ENCODE measurements at regions of chr5 and their contacts with region 1.

Region 1: GRCh38 chr5:50667653-50668595 is 1.5 kb downstream of the PARP8 start:
- DNase-seq: peak; percentile 88
- H3K4me3 ChIP-seq: peak overlapping the region; percentile 91
- H3K27ac ChIP-seq: peak overlapping the region; percentile 83
- H3K4me1 ChIP-seq: peaks cover 48% of the 10 kb centered on the region
- CTCF ChIP-seq: no peak; the same call in 1 of the 2 replicates

Region 2: GRCh38 chr5:50501491-50502228 is 166.3 kb before region 1 on chr5:
- CTCF ChIA-PET with region 1: no interaction called
- POLR2A ChIA-PET with region 1: no interaction called
- intact Hi-C with region 1: loop called (anchors 5 kb)
- DNase-seq: peak; percentile 89
- H3K4me3 ChIP-seq: peak overlapping the region; percentile 52
- H3K27ac ChIP-seq: peak overlapping the region; percentile 95
- H3K4me1 ChIP-seq: peaks cover 26% of the 10 kb centered on the region
- CTCF ChIP-seq: no peak

Region 3: DNA sequence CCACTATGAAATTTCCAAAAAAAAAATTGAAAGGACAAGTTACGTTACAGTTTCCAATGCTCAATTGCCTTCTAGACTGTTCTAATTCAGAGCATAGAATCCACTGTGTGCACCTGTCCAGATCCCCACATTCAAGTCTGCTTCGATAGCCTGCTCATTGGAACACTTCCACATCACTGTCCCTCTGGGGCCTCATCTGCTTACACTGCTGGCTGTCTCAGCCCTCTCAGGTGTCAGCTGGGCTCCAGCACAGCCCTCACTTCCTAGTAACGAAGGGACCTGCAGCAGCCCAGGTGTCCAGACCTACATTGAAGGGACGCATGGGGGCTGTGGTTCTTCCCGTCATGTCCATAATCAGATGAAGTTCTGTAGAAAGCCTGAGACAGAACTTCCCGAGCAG is 132.5 kb before region 1 on chr5:
- CTCF ChIA-PET with region 1: no interaction called
- POLR2A ChIA-PET with region 1: no interaction called
- intact Hi-C with region 1: loop called (anchors 5 kb)
- DNase-seq: peak; percentile 65
- H3K4me3 ChIP-seq: no peak overlapping the region
- H3K27ac ChIP-seq: no peak overlapping the region
- H3K4me1 ChIP-seq: peaks cover 30% of the 10 kb centered on the region
- CTCF ChIP-seq: no peak

Region 4: GRCh38 chr5:50580506-50580905 is 87.4 kb before region 1 on chr5:
- CTCF ChIA-PET with region 1: no interaction called
- POLR2A ChIA-PET with region 1: no interaction called
- intact Hi-C with region 1: no loop called
- DNase-seq: no peak
- H3K4me3 ChIP-seq: no peak overlapping the region
- H3K27ac ChIP-seq: no peak overlapping the region
- H3K4me1 ChIP-seq: no peaks in the 10 kb centered on the region
- CTCF ChIP-seq: no peak

Region 5: GRCh38 chr5:50711273-50711672 is 43.3 kb after region 1 on chr5:
- CTCF ChIA-PET with region 1: no interaction called
- POLR2A ChIA-PET with region 1: interaction called, 3 read pairs
- intact Hi-C with region 1: loop called (anchors 5 kb)
- DNase-seq: peak; percentile 80
- H3K4me3 ChIP-seq: peak overlapping the region; percentile 44
- H3K27ac ChIP-seq: peak overlapping the region; percentile 47
- H3K4me1 ChIP-seq: peaks cover 26% of the 10 kb centered on the region
- CTCF ChIP-seq: no peak

Region 6: DNA sequence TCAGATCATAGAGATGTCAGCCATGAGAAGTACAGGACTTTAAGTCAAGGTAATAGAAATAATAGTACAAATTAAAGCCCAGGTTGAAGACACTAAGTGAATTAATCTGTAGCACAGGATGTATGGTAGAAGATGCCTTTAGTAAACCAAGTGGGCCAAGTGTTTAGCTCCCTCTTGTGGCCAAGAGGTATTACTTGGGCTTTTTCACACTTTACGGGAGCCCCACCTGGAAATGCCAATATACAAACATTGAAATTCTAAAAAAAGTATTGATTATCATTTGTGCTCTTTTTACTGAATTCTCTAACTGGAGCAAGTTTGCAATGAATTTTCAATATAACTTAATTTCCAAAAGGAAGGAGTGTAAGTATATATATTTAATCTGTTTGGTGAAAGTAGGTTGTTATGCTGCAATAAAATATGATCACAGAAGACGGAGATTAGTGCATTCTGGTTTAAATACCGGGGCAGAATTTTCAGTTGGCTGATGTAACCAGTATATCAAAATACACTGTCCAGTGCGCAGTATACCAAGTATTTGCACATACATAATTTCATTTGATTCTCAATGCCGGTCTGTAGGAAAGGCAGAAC is 83.2 kb after region 1 on chr5:
- CTCF ChIA-PET with region 1: no interaction called
- POLR2A ChIA-PET with region 1: interaction called, 10 read pairs
- intact Hi-C with region 1: loop called (anchors 2 kb)
- DNase-seq: peak; percentile 83
- H3K4me3 ChIP-seq: no peak overlapping the region
- H3K27ac ChIP-seq: no peak overlapping the region
- H3K4me1 ChIP-seq: peaks cover 25% of the 10 kb centered on the region
- CTCF ChIP-seq: peak; percentile 99

Region 7: GRCh38 chr5:50853151-50853550 is 185.2 kb after region 1 on chr5:
- CTCF ChIA-PET with region 1: no interaction called
- POLR2A ChIA-PET with region 1: interaction called, 3 read pairs
- intact Hi-C with region 1: loop called (anchors 2 kb)
- DNase-seq: peak; percentile 93
- H3K4me3 ChIP-seq: peak overlapping the region; percentile 41
- H3K27ac ChIP-seq: peak overlapping the region; percentile 75
- H3K4me1 ChIP-seq: peaks cover 61% of the 10 kb centered on the region
- CTCF ChIP-seq: no peak

Region 8: GRCh38 chr5:51185850-51186329 is 518.0 kb after region 1 on chr5:
- CTCF ChIA-PET with region 1: no interaction called
- POLR2A ChIA-PET with region 1: no interaction called
- intact Hi-C with region 1: no loop called
- DNase-seq: no peak
- H3K4me3 ChIP-seq: no peak overlapping the region
- H3K27ac ChIP-seq: no peak overlapping the region
- H3K4me1 ChIP-seq: no peaks in the 10 kb centered on the region
- CTCF ChIP-seq: no peak

Measured in OCI-LY7 (cell line).